Esophagus muscularis mucosa (tissue), 4 donors: ENCODE measurements at regions of chr2 and their contacts with region 1.

Region 1: DNA sequence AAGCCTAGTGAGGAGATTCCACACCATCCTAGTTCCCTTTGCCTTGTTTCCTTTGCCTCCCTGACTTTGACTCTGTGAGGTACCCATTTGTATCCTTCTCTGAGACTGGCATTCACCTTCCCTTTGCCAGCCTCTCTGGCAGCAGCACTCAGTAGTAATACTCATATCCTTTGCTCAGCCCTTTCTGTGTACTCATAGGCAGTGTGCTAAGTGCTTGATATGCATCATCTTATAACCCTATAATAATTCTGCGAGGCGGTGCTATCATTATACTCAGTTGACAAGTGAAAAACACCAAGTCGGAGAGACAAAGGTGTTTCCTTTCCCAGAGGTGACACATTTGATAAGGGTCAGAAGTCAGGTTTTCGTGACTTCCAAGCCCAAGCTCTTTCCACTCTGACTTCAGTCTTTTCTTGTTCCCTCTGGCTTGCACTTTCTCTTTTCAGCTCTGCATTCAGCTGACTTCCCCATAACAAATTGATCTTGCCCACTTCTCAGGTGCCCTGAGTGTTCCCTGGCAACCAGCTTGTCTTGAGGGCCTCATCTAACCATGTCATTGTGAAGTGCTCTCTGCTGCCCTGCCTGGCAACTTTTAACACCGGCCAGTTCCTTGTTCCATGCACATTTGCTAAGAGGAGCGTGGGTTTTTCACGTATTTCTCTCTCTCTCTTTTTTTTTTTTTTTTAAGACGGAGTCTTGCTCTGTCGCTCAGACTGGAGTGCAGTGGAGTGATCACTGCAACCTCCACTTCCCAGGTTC is 94.5 kb upstream of the UPP2 start:
- DNase-seq: no peak
- H3K4me3 ChIP-seq: no peak overlapping the region
- H3K27ac ChIP-seq: no peak overlapping the region
- H3K4me1 ChIP-seq: peaks cover 6 to 12% (median 11%) of the 10 kb centered on the region in 4 donors
- H3K27me3 ChIP-seq: no peaks in the 10 kb centered on the region
- CTCF ChIP-seq: no peak
- EP300 ChIP-seq: no peak
- POLR2A ChIP-seq: no peak

Region 2: GRCh38 chr2:157327621-157328500 is 679.3 kb before region 1 on chr2:
- intact Hi-C with region 1: loop called (anchors 10 kb)
- DNase-seq: no peak
- H3K4me3 ChIP-seq: no peak overlapping the region
- H3K27ac ChIP-seq: no peak overlapping the region
- H3K4me1 ChIP-seq: peaks cover 4 to 9% (median 7%) of the 10 kb centered on the region in 4 donors
- H3K27me3 ChIP-seq: no peaks in the 10 kb centered on the region
- CTCF ChIP-seq: peak; percentile 71 to 97 (median 88)
- EP300 ChIP-seq: no peak
- POLR2A ChIP-seq: no peak

Region 3: DNA sequence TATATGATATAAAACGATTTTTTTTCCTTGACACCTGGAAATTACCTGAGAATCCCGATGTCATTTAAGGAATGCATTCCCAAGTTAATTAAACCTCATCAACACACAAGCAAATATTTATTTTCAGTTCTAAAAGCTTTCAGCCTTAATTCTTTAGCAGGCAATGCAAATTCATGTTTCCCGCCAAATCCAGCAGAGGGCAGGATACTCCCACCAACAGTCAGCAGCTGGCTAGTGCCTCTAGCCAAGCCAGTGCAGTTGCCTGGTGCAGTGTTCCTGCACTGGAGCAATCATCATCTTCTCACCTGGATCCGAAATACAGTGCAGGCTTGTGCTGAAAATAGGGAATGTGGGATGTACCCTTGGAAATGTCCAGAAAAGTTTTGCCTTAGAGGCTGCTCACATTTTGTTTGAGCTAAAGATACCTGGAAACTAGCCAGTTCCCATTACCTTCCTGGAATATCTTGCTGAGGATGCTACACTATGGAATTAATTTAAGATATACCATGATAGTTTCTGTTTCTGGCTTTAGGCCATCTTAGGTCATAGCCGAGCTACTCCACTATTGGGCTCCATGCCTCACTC is 514.9 kb before region 1 on chr2:
- intact Hi-C with region 1: loop called (anchors 5 kb)
- DNase-seq: no peak
- H3K4me3 ChIP-seq: no peak overlapping the region
- H3K27ac ChIP-seq: no peak overlapping the region
- H3K4me1 ChIP-seq: no peaks in the 10 kb centered on the region
- H3K27me3 ChIP-seq: peaks cover 0 to 7% (median 0%) of the 10 kb centered on the region in 4 donors
- CTCF ChIP-seq: peak; percentile 51 to 70 (median 58)
- EP300 ChIP-seq: no peak
- POLR2A ChIP-seq: no peak

Region 4: GRCh38 chr2:157777427-157777826 is 229.7 kb before region 1 on chr2:
- intact Hi-C with region 1: loop called (anchors 2 kb)
- DNase-seq: no peak
- H3K4me3 ChIP-seq: no peak overlapping the region
- H3K27ac ChIP-seq: no peak overlapping the region
- H3K4me1 ChIP-seq: peaks cover 7 to 13% (median 11%) of the 10 kb centered on the region in 4 donors
- H3K27me3 ChIP-seq: no peaks in the 10 kb centered on the region
- CTCF ChIP-seq: peak; percentile 59 to 69 (median 60)
- EP300 ChIP-seq: no peak
- POLR2A ChIP-seq: no peak

Region 5: GRCh38 chr2:157876066-157876787 is 130.9 kb before region 1 on chr2 and contains the start of gene ACVR1:
- intact Hi-C with region 1: loop called (anchors 5 kb)
- DNase-seq: peak; percentile 98
- H3K4me3 ChIP-seq: peak within 1 kb of the TSS; percentile 79 to 93 (median 90)
- H3K27ac ChIP-seq: peak within 1 kb of the TSS; percentile 94 to 98 (median 96)
- H3K4me1 ChIP-seq: peaks cover 16 to 49% (median 46%) of the 10 kb centered on the region in 4 donors
- H3K27me3 ChIP-seq: no peaks in the 10 kb centered on the region
- CTCF ChIP-seq: peak; percentile 14 to 53 (median 40)
- EP300 ChIP-seq: no peak
- POLR2A ChIP-seq: peak; percentile 55
- total RNA-seq, gene ACVR1: 25.2 to 39.1 (median 32.3) TPM

Region 6: GRCh38 chr2:157894694-157895435 is 112.3 kb before region 1 on chr2:
- intact Hi-C with region 1: loop called (anchors 5 kb)
- DNase-seq: no peak
- H3K4me3 ChIP-seq: no peak overlapping the region
- H3K27ac ChIP-seq: no peak overlapping the region
- H3K4me1 ChIP-seq: peaks cover 0 to 7% (median 3%) of the 10 kb centered on the region in 4 donors
- H3K27me3 ChIP-seq: no peaks in the 10 kb centered on the region
- CTCF ChIP-seq: no peak
- EP300 ChIP-seq: no peak
- POLR2A ChIP-seq: no peak

Region 7: DNA sequence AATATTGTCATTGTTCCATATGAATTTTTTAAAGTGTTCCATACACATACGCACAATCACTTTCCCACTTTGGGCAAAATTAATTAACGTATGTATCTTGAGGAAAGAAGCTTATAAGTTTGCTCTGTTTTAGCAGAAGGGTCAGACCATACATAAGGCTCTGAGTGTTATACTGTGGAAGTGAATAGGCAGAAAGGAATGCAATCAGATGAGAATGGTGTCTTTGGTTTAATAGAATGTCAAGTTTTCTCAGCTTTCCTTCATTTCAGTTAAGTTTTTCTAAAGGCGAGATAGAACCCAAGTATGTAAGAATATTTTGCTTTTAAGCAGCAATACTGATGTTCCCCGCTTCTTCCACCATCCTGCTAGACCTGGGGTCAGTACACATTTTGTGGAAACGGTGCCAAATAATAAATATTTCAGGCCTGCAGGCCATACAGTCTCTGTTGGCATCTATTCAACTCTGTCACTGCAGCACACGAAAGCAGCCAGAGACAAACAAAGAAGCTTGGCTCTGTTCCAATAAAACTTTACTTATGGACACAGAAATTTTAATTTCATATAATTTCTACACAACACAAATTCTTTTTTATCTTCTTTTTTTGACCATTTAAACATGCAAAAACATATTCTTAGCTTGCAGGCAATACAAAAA is 195.1 kb after region 1 on chr2:
- intact Hi-C with region 1: no loop called
- DNase-seq: no peak
- H3K4me3 ChIP-seq: no peak overlapping the region
- H3K27ac ChIP-seq: no peak overlapping the region
- H3K4me1 ChIP-seq: peaks cover 0 to 9% (median 2%) of the 10 kb centered on the region in 4 donors
- H3K27me3 ChIP-seq: no peaks in the 10 kb centered on the region
- CTCF ChIP-seq: no peak
- EP300 ChIP-seq: no peak
- POLR2A ChIP-seq: no peak